ENCODE measurements at regions of chr10 and their contacts with region 1.

Region 1: GRCh38 chr10:113216102-113216501 is 266.1 kb downstream of the TCF7L2 start:
- DNase-seq: peak; percentile 22
- H3K27ac ChIP-seq: no peak overlapping the region
- CTCF ChIP-seq: no peak

Region 2: DNA sequence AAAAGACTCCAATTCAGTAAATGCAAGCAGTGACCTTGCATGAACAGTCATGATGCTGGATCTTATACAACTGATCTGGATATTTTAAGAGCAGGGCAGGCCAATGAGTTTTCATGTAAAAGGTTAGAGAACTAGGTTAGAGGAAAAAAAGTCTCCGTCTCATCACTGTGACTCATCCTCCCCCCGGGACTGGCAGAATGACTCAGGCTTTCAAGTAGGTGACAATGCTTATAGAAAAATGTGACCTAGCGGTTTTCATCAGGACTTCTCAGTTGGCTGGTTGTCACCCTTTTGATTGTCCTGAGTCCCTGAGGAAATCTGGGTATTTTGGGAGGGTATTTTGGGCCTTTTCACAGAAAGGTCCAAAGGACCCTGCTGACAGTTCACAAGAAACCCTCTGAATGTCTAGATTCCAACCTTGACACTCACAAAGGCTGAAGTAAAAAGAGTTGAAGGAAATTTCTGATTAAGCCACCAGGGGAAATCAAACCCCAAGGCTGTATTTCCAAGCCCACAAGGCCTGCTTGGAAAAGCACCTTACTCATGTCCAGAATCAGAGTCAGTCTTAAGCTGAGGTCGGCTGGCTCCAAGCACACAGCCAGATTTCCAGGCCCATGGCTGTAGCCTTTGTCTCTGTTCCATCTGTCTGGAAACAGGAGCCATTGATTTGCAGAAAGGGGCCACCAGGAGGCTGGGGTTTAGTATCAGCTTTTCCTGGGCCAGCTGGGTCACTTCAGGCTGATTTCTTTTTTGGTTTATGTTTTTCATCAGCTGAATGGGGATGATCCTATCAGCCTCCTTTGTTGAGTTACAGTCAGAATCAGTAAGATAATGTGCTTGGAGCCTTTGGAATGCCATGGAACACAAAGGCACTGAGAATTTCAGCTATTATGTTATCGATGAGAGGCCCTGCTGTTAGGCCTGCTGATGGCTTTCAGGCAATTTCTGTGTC is 110.3 kb after region 1 on chr10:
- CTCF ChIA-PET with region 1: no interaction called
- POLR2A ChIA-PET with region 1: no interaction called
- DNase-seq: peak; percentile 79
- H3K27ac ChIP-seq: no peak overlapping the region
- CTCF ChIP-seq: no peak

Region 3: DNA sequence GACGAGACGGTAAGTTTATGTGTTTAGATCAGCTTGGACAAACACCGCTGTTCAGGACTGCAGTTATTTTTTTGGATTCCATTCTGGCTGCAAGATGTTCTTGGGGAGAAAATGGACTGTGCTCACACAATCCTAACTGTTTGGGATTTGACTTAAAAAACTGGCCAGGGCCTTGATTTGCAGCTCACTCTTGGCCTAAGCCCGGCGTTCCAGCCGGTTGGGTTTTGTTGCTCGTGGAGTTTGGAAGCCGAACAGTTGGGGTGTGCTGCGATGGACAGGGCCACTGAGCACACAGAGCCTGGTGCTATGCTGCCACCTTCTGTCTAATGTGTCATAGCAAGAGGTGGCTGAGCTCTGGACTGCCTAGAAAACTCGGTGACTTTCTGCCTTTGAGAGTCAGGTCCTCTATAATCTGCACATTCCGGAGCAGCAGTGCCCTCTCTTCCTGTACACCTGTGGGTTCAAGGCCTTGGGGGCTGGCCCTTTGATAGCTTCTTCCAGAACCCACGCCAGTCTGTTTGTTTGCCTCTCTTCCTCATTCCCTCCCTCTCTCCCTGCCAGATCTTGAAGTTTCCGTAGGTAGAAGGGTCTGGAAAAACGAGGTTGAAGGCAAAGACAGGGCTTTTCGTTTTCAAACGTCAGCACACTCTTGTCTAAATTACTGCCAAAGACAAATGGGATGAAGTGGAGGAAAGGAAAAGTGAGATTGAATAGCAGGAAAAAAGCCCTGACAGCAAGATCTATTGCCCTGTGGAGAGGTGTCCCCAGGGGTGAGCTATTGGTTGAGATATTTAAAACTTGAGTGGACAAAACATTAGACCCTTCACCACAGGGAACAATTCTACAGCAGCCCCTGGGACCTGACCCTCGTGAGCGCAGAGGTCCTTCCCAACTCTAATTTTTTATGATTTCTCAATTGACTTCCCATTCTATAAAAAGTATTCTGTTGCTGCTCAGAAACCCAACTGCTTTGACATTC is 169.2 kb after region 1 on chr10:
- CTCF ChIA-PET with region 1: interaction called, 15 read pairs
- POLR2A ChIA-PET with region 1: no interaction called
- DNase-seq: peak; percentile 77
- H3K27ac ChIP-seq: no peak overlapping the region
- CTCF ChIP-seq: peak; percentile 75